ENCODE measurements at regions of chr2 and their contacts with region 1.

Region 1: GRCh38 chr2:17719562-17720371 is 33.8 kb downstream of the SMC6 start:
- DNase-seq: no peak
- H3K4me3 ChIP-seq: no peak overlapping the region
- H3K27ac ChIP-seq: no peak overlapping the region
- H3K4me1 ChIP-seq: no peaks in the 10 kb centered on the region
- H3K27me3 ChIP-seq: no peaks in the 10 kb centered on the region
- CTCF ChIP-seq: peak in 2 of 3 donors; percentile 24 to 36
- EP300 ChIP-seq: no peak
- POLR2A ChIP-seq: no peak

Region 2: DNA sequence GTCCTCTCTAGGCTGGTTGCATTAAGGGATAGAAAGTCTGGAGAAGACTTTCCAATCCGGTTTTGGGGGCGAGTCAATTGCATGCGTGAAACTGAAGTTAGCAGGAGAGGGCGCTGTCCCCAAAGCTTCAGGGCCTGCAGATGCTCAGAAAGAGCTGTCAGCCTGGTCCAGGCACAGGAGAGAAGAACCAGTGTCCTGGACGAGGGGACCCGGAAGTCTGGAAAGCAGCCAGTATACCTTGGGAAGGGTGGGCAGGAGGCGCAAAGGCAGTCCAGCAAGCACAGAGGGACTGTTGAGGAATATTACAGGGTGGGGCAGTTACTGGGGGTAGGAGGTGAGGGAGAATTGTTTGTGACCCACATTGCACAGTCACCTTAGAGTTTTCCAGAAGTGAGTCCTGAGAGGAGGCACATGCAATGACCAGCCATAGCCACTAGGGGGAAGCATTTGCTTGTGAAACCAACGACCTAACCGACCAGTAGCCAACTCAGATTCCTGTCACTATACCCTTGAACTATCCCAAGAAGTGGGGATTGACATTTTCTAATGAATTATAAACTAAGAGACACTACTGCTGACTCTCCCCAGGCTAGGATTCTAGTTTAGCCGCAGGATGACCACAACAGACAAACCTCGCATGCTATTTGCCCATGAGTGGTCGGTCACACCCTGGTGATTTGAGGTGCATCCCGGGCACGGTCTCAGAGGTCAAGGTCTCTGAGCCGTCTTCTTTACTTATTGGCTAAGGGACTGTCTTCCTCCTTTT is 667.9 kb after region 1 on chr2:
- intact Hi-C with region 1: loop called in 1 of 4 experiments (anchors 10 kb)
- DNase-seq: peak; percentile 42 to 78 (median 68)
- H3K4me3 ChIP-seq: no peak overlapping the region
- H3K27ac ChIP-seq: no peak overlapping the region
- H3K4me1 ChIP-seq: no peaks in the 10 kb centered on the region
- H3K27me3 ChIP-seq: no peaks in the 10 kb centered on the region
- CTCF ChIP-seq: peak; percentile 43 to 79 (median 54)
- EP300 ChIP-seq: no peak
- POLR2A ChIP-seq: no peak

Measured in ovary (tissue), 10 donors.